ENCODE measurements at regions of chr1 and their contacts with region 1.

Region 1: GRCh38 chr1:112715264-112716053 is at the start of gene PPM1J:
- DNase-seq: peak; percentile 96 to 99
- H3K4me3 ChIP-seq: peak within 1 kb of the TSS; percentile 80 to 85
- H3K27ac ChIP-seq: peak within 1 kb of the TSS; percentile 62 to 65
- H3K4me1 ChIP-seq: peaks cover 6 to 13% of the 10 kb centered on the region in 2 donors
- H3K27me3 ChIP-seq: no peaks in the 10 kb centered on the region
- CTCF ChIP-seq: no peak
- total RNA-seq, gene PPM1J: 10.0 TPM

Region 2: DNA sequence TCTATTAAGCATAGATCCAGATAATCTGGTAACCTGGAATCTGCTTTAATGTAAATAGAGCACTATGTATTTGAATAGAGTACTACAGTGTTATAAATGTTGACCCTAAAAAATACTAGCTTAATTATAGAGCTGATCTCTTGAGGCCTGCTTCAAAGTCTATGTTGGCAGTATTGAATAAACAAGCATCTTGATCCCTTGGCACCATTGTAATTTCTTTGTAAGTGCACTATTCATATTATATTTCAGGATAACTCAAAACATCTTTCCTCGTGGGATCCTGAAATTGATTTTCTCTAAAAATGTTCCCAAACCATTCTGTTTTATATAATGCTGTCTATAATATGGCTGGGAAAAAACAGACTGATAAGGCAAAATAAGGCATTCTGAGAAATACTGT is 308.7 kb before region 1 on chr1:
- intact Hi-C with region 1: no loop called
- DNase-seq: no peak
- H3K4me3 ChIP-seq: no peak overlapping the region
- H3K27ac ChIP-seq: no peak overlapping the region
- H3K4me1 ChIP-seq: peaks cover 0 to 10% of the 10 kb centered on the region in 2 donors
- H3K27me3 ChIP-seq: no peaks in the 10 kb centered on the region
- CTCF ChIP-seq: no peak

Region 3: DNA sequence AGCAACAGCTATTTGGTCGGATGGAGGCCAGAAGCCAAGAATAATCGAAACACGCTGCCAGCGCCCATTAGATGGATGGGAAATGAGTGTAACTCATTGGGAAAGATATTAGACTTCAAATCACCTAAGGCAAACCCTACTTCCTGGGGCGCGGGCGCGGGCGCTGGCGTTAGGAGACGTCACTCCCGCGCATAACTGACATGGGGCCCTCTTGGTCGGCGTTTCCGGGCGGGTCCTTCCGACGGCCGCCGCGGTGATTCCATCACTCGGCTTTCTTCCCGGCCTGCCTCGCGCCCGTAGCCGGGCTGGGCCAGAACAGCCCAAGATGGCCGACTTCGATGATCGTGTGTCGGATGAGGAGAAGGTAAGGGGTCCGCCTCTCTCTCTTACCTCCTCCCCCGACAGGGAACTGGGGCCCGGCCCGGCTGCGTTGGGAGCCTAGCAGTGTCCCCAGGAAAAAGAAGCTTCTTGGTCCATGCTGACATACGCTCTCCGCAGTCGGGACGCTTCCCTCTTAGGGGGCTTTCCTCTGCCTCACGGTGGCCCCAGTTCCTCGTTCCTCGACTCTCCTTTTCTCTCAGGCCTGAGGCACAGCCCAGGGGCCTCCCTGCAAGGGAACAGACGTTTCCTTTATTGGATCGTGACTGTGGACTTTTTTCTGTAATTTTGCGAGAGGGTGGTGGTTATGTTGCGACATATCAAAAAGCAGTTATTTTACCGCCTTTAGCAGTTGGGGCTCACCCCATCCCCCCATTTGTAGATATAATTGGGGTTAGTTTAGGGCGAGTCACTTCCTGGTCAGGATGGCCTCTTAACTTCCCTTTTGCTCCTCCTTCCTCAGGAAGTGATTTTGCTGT is 95.7 kb before region 1 on chr1 and contains the start of gene CAPZA1:
- intact Hi-C with region 1: loop called (anchors 2 kb)
- DNase-seq: peak; percentile 72 to 95
- H3K4me3 ChIP-seq: peak within 1 kb of the TSS; percentile 83 to 84
- H3K27ac ChIP-seq: peak within 1 kb of the TSS; percentile 96 to 100
- H3K4me1 ChIP-seq: peaks cover 5 to 22% of the 10 kb centered on the region in 2 donors
- H3K27me3 ChIP-seq: no peaks in the 10 kb centered on the region
- CTCF ChIP-seq: no peak
- total RNA-seq, gene CAPZA1: 53.5 TPM

Region 4: GRCh38 chr1:112955781-112956543 is 240.5 kb after region 1 on chr1 and contains the start of gene SLC16A1:
- intact Hi-C with region 1: loop called (anchors 2 kb)
- DNase-seq: peak; percentile 80 to 95
- H3K4me3 ChIP-seq: peak within 1 kb of the TSS; percentile 71 to 88
- H3K27ac ChIP-seq: peak within 1 kb of the TSS; percentile 88 to 94
- H3K4me1 ChIP-seq: peaks cover 0 to 23% of the 10 kb centered on the region in 2 donors
- H3K27me3 ChIP-seq: no peaks in the 10 kb centered on the region
- CTCF ChIP-seq: peak in 2 of 3 experiments; percentile 33 to 42
- total RNA-seq, gene SLC16A1: 31.8 TPM

Region 5: DNA sequence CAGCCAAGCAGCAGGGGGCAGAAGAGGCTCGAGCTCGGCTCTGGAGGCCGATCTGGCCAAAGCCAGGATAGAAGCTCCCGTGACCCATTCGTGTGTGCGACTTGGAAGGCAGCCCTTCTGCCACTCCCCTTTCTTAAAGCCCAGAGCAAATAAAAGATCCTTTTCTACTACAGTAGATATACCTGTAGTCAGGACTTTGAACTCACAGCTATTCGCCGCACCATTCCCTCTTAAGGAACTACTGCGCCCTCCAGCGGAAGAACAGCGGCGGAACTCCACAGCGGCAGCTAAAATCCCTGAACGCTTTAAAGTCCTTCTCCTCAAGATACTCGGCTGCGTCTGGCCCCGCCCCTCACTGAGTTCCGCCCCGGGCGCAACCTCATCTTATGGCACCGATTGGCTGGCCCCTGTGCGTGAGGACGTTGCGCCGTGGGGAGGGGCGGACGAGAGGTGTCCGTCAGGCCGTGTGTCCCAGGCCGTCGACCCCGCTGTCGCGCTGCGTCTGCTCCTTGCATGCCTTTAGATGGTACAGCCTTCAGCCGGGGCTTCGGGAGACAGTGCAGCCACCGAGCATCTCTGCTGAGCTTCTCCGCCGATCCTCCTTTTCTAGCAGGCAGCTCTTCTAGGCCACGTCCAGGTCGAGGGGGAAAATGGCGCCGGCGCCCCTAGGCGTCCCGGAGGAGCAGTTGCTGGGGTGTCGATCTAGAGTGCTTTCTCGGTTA is 357.5 kb after region 1 on chr1 and contains the start of gene LRIG2:
- intact Hi-C with region 1: loop called (anchors 2 kb)
- DNase-seq: peak; percentile 97 to 99
- H3K4me3 ChIP-seq: peak within 1 kb of the TSS; percentile 63 to 79
- H3K27ac ChIP-seq: peak within 1 kb of the TSS; percentile 84
- H3K4me1 ChIP-seq: peaks cover 3 to 8% of the 10 kb centered on the region in 2 donors
- H3K27me3 ChIP-seq: no peaks in the 10 kb centered on the region
- CTCF ChIP-seq: peak; percentile 77 to 87 (median 83)
- total RNA-seq, gene LRIG2: 16.1 TPM

Region 6: GRCh38 chr1:113811888-113812660 is 1096.6 kb after region 1 on chr1 and contains the start of gene RSBN1:
- intact Hi-C with region 1: loop called (anchors 5 kb)
- DNase-seq: peak; percentile 99 to 100
- H3K4me3 ChIP-seq: peak within 1 kb of the TSS; percentile 82 to 91
- H3K27ac ChIP-seq: peak within 1 kb of the TSS; percentile 95 to 97
- H3K4me1 ChIP-seq: peaks cover 0 to 5% of the 10 kb centered on the region in 2 donors
- H3K27me3 ChIP-seq: no peaks in the 10 kb centered on the region
- CTCF ChIP-seq: peak in 1 of 3 experiments; percentile 7
- total RNA-seq, gene RSBN1: 22.7 TPM